CD14-positive monocyte (primary cell): ENCODE measurements at regions of chr1 and their contacts with region 1.

Region 1: GRCh38 chr1:114597949-114598348 is 16.5 kb upstream of the BCAS2 start:
- DNase-seq: no peak
- H3K4me3 ChIP-seq: no peak overlapping the region
- H3K4me3 Mint-ChIP-seq: no peak overlapping the region
- H3K27ac ChIP-seq: no peak overlapping the region
- H3K27ac Mint-ChIP-seq: no peak overlapping the region
- H3K4me1 ChIP-seq: no peaks in the 10 kb centered on the region
- H3K4me1 Mint-ChIP-seq: no peaks in the 10 kb centered on the region
- H3K27me3 ChIP-seq: peaks cover 2 to 12% of the 10 kb centered on the region in 2 donors
- H3K27me3 Mint-ChIP-seq: peaks cover 5 to 12% (median 11%) of the 10 kb centered on the region in 3 donors
- CTCF ChIP-seq: no peak

Region 2: DNA sequence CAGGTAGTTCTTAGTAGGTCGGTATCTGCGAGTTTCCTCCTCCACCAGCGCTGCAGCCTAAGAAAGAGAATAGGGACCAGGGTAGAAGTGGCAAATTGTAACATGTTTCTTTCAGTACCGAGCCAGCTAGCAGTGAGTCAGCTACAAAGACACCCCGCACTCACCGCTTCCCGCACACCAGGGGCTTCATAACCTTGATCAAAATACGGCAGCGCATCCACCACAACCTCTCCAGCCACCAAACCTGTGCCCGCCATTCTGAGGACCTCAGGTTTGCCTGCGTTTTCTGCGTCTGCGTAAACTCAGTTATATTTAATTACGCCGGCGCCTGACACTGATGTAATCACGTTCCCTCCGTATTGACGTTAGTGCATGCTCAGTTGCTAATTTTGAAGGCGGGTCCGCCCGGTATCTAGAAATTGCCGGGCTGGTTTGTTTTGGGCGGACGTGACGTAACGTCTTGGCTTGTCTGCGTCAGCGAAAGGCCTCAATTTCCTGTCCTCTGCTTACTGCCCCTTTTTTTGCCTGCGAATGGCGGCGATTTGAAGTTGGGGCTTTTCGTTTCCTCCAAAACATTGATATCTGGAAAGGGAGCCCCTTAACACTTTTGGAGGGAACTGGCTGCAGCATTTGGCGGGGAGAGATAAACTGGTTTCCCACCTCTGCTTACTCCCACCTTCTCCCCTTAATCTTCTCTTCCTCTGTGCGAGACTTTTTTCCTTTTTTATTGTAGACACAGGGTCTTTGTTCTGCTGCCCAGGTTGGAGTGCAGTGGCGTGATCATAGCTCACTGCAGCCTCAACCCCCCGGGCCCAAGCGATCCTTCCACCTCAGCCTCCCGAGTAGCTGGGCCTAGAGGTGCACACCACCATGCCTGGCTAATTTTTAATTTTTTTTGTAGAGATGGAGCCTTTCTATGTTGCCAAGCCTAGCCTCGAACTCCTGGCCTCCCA is 16.3 kb before region 1 on chr1 and contains the start of gene BCAS2:
- intact Hi-C with region 1: no loop called
- DNase-seq: peak; percentile 97 to 98 (median 98)
- H3K4me3 ChIP-seq: peak within 1 kb of the TSS; percentile 73 to 96 (median 93)
- H3K4me3 Mint-ChIP-seq: peak within 1 kb of the TSS; percentile 90 to 98
- H3K27ac ChIP-seq: peak within 1 kb of the TSS; percentile 75 to 96
- H3K27ac Mint-ChIP-seq: peak within 1 kb of the TSS; percentile 96 to 100 (median 99)
- H3K4me1 ChIP-seq: peaks cover 9 to 21% of the 10 kb centered on the region in 2 donors
- H3K4me1 Mint-ChIP-seq: peaks cover 9% of the 10 kb centered on the region
- H3K27me3 ChIP-seq: peaks cover 0 to 6% of the 10 kb centered on the region in 2 donors
- H3K27me3 Mint-ChIP-seq: peaks cover 11 to 13% (median 11%) of the 10 kb centered on the region in 3 donors
- CTCF ChIP-seq: no peak
- polyA plus RNA-seq, gene BCAS2: 22.1 to 55.7 (median 47.6) TPM

Region 3: GRCh38 chr1:114648502-114648901 is 50.6 kb after region 1 on chr1:
- intact Hi-C with region 1: loop called in 1 of 2 experiments (anchors 10 kb)
- DNase-seq: no peak
- H3K4me3 ChIP-seq: no peak overlapping the region
- H3K4me3 Mint-ChIP-seq: no peak overlapping the region
- H3K27ac ChIP-seq: no peak overlapping the region
- H3K27ac Mint-ChIP-seq: no peak overlapping the region
- H3K4me1 ChIP-seq: no peaks in the 10 kb centered on the region
- H3K4me1 Mint-ChIP-seq: no peaks in the 10 kb centered on the region
- H3K27me3 ChIP-seq: no peaks in the 10 kb centered on the region
- H3K27me3 Mint-ChIP-seq: peaks cover 1 to 7% (median 3%) of the 10 kb centered on the region in 3 donors
- CTCF ChIP-seq: no peak